ENCODE measurements at regions of chr4 and their contacts with region 1.

Region 1: GRCh38 chr4:83284193-83285054 is at the start of gene COQ2:
- DNase-seq: peak; percentile 97
- H3K4me3 Mint-ChIP-seq: peak within 1 kb of the TSS; percentile 92
- H3K27ac Mint-ChIP-seq: peak within 1 kb of the TSS; percentile 99
- H3K4me1 Mint-ChIP-seq: peaks cover 50% of the 10 kb centered on the region
- H3K27me3 Mint-ChIP-seq: no peaks in the 10 kb centered on the region

Region 2: GRCh38 chr4:82753725-82754410 is 530.6 kb before region 1 on chr4:
- CTCF ChIA-PET with region 1: no interaction called
- DNase-seq: no peak
- H3K4me3 Mint-ChIP-seq: no peak overlapping the region
- H3K27ac Mint-ChIP-seq: no peak overlapping the region
- H3K4me1 Mint-ChIP-seq: no peaks in the 10 kb centered on the region
- H3K27me3 Mint-ChIP-seq: peaks cover 39% of the 10 kb centered on the region

Region 3: DNA sequence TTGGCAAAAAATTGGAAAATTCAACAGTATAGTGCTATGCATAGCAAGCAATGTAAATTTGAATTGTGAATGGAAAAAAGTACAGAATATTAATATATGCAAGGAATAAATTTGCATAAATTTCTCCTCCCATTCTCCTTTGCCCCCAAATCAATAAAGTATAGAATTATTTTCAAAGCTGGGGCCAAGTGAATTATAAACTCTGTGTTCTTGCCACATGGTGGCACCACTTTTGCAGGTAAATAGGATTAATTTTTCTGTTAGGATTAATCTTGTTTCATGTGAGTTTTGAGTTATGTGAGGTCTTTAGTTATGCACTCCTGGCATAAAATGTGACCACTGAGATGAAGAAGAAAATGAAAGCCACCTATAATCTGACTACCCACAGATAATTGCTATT is 229.5 kb before region 1 on chr4:
- CTCF ChIA-PET with region 1: interaction called, 21 read pairs
- DNase-seq: peak; percentile 37
- H3K4me3 Mint-ChIP-seq: no peak overlapping the region
- H3K27ac Mint-ChIP-seq: no peak overlapping the region
- H3K4me1 Mint-ChIP-seq: peaks cover 2% of the 10 kb centered on the region
- H3K27me3 Mint-ChIP-seq: no peaks in the 10 kb centered on the region

Region 4: DNA sequence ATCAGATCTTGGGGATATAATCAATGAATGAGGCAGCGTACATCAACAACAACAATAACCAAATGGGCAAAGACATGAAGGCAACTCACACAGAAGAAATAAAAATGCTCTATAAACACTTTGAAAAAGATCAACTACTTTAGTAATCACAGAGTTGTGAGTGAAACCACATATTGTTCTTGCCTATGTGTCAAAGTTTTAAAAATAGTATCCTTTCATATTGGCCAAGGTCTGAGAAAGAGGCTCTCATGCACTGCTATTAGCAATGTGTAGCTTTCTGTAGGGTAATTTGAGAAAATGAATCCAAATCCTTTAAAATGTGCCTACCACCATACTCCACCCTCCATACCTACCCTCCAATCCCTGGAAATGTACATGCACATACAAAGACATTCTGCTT is 24.8 kb before region 1 on chr4:
- CTCF ChIA-PET with region 1: interaction called, 33 read pairs
- DNase-seq: no peak
- H3K4me3 Mint-ChIP-seq: no peak overlapping the region
- H3K27ac Mint-ChIP-seq: no peak overlapping the region
- H3K4me1 Mint-ChIP-seq: peaks cover 18% of the 10 kb centered on the region
- H3K27me3 Mint-ChIP-seq: no peaks in the 10 kb centered on the region

Region 5: GRCh38 chr4:83272900-83273299 is 11.5 kb before region 1 on chr4:
- CTCF ChIA-PET with region 1: interaction called, 33 read pairs
- DNase-seq: no peak
- H3K4me3 Mint-ChIP-seq: no peak overlapping the region
- H3K27ac Mint-ChIP-seq: no peak overlapping the region
- H3K4me1 Mint-ChIP-seq: peaks cover 17% of the 10 kb centered on the region
- H3K27me3 Mint-ChIP-seq: no peaks in the 10 kb centered on the region

Region 6: DNA sequence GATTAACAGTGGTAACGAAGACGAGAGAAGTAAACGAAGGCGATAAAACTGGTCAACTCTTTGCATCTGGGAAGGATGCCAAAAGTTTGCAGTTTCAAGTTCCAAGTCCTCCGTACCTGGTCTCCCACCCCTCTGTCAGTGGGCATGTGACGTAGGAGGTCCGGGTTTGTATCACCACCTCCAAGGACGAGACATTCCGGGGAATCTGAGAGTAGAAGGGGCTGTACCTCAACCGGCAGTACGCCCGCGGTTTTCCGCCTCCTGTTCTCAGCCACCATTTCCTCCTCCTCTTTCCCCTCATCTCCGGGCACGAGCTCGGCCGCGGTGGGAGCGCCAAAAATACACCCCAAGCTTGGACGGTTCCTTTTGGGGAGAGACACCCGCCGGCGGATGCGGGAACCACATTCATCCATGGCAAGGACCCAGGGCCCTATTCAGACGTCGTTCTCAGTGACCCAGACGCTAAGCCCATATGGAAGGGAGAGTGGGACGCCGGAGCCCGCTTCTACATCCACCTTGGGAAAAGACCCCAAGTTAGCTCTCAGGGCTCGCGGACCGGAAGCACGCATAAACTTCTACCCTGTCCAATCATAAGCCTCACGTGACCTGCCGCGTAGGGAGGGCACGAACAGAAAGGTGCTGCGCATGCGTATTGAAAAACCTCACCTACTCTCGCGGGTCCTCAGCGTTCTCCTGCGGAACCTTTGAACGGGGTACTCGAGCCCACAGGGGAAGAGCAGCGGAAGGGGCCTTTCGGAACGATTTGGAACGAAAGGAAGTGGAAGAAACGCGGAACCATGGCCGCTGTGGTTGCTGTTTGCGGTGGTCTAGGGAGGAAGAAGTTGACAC is 171.1 kb after region 1 on chr4 and contains the starts of genes HELQ and MRPS18C:
- CTCF ChIA-PET with region 1: interaction called, 11 read pairs
- DNase-seq: peak; percentile 97
- H3K4me3 Mint-ChIP-seq: peak within 1 kb of the TSS; percentile 97
- H3K27ac Mint-ChIP-seq: peak within 1 kb of the TSS; percentile 100
- H3K4me1 Mint-ChIP-seq: peaks cover 53% of the 10 kb centered on the region
- H3K27me3 Mint-ChIP-seq: no peaks in the 10 kb centered on the region

Region 7: DNA sequence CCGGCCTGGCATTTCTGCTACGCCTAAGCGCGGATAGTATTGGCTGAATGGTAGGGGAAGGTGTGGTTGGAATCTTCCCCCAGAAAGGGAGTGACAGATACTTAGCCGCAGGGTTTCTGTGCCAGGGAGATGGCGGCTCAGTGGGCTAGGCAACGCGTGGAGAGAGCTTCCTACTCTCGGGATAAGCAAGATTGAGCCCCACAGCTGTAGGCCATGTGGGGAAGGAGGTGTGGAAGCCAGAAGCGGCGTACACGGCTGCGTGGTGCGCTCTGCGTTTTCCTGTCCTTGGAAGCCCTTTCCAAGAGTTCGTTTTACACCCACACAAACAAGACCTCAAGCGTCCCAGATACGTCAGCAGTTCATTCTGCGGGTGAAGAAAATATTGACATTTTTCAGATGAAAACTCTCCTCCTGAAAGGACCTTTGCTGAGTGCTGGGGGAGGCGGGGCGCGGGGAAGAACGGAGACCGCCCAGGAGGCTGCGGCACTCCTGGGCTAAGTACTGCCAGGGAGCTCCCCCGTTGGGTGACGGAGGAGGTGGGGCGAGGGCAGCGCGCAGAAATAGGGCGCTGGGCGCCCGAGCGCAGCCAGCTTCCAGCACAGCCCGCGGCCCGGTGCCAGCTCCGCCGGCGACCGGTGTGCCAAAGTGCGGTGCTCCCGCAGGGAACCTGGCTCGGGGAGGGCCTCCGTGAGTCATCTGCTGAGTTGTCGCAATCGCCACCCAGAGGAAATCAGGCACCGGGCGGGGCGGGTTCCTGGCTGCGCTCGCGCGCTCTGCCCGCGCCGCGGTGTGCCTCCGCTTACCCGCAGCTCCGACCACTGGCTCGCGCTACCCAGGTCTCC is 251.3 kb after region 1 on chr4 and contains the start of gene GPAT3:
- CTCF ChIA-PET with region 1: no interaction called
- DNase-seq: peak; percentile 76
- H3K4me3 Mint-ChIP-seq: peak within 1 kb of the TSS; percentile 76
- H3K27ac Mint-ChIP-seq: no peak within 1 kb of the TSS
- H3K4me1 Mint-ChIP-seq: peaks cover 18% of the 10 kb centered on the region
- H3K27me3 Mint-ChIP-seq: peaks cover 46% of the 10 kb centered on the region